HepG2 (cell line): ENCODE measurements at regions of chr14 and their contacts with region 1.

Region 1: DNA sequence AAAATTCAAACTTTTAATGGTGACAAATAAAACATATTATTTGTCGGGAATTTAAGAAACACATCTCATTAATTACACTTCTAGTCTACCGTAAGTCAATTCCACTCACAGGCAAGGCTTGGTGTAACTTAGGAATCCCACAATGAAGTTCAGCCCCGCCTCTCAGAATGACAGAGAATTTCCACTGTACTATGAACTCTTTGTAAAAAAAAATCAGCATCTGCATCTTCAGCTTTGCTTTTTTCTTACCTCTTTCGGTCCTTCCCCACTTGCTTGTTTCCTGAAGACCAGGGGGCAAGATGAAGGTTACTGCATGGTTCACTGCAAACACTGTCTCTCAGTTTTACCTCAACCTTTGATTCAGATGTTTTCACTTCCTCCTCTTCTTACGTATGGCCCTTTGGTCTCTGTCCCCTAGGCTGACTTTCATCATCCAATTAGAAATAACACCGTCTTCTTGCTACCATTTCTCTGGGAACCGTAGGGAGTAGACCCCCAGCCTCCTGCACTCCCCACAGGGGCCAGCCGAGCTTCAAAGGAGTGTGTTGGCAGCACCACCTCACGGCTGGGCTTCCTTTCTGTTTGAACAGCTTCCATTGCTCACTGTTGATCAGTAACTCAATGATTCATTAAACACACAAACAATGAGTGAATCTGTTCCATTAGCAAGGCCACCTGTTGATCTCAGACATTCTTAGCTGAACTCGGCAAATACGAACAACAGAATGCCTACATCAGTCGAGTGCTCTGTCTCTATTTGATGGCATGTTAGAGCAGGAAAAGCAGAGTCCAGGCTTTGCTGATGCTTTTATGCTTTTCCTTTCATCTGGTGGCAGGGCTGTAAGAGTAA is 343.0 kb downstream of the BMP4 start:
- DNase-seq: peak; percentile 100
- ATAC-seq: peak; percentile 98
- H3K4me3 ChIP-seq: peak overlapping the region; percentile 70 to 72 (median 70)
- H3K27ac ChIP-seq: peak overlapping the region; percentile 98
- H3K4me1 ChIP-seq: peaks cover 91% of the 10 kb centered on the region
- H3K27me3 ChIP-seq: no peaks in the 10 kb centered on the region
- CTCF ChIP-seq: peak; percentile 72
- EP300 ChIP-seq: peak; percentile 94 to 97
- POLR2A ChIP-seq: peak; percentile 62 to 73; a peak in 3 of 4 replicates
- RAD21 ChIP-seq: no peak; the same call in 1 of the 2 replicates

Region 2: DNA sequence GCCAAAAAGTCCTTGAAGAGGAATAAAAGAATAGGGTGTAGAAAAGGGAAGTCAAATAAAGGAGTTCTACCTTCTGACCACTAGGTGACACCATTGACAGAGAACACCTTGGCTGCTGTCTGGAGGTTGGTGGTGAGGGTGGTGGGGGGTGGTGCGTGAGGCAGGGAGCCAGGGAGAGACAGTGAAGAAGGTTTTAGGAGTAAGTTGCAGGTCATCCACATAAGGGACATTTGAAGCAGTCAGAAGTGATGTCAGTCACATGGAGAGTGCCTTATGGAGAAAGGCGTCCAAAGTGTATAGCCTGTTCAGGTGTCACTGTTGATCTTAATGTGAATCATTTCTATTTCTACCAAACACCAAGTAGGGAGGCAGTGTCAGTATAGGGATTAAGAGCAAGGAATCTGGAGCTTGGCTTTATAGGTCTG is 181.2 kb before region 1 on chr14:
- CTCF ChIA-PET with region 1: no interaction called
- POLR2A ChIA-PET with region 1: interaction called, 3 read pairs
- in situ Hi-C with region 1: no loop called
- intact Hi-C with region 1: loop called (anchors 10 kb)
- DNase-seq: peak; percentile 59
- ATAC-seq: peak; percentile 92
- H3K4me3 ChIP-seq: no peak overlapping the region
- H3K27ac ChIP-seq: no peak overlapping the region
- H3K4me1 ChIP-seq: peaks cover 27% of the 10 kb centered on the region
- H3K27me3 ChIP-seq: no peaks in the 10 kb centered on the region
- CTCF ChIP-seq: peak; percentile 92
- EP300 ChIP-seq: no peak
- POLR2A ChIP-seq: no peak
- RAD21 ChIP-seq: peak; percentile 88

Region 3: DNA sequence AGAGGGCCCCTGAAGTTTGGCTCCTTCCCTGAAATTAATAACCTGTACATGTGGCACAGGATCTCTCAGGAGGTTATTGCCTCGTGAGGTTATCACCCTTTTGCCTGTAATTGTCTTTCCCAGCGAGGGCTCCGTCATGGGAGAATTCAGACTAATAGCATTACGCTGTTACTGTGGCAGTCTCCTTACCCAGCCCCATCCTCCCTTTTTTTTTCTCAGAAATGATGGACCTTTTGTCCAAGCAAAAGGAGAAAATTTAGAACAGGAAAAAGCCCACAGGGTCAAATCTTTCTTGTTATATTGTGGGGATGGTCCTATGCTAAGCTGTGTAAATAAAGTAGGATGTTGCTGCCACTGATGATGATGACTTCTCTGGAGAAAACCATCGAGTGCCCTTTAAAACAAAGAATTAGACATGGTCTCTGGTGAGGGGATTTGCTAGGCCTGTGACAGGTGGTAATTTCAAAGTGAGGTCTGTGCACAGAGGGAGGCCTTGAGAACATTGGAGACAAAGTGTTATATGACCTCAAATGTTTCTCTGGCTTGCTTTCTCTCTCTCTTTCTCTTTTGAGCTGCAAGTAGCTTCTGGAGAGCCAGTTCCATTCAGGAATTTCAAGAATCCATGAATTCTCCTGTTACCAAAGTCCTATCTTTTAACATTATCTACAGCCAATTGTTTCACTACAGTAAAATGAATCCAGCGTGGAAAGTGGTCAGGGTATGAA is 14.2 kb before region 1 on chr14:
- CTCF ChIA-PET with region 1: no interaction called
- POLR2A ChIA-PET with region 1: interaction called, 26 read pairs
- in situ Hi-C with region 1: no loop called
- intact Hi-C with region 1: no loop called
- DNase-seq: peak; percentile 15
- ATAC-seq: no peak
- H3K4me3 ChIP-seq: no peak overlapping the region
- H3K27ac ChIP-seq: no peak overlapping the region
- H3K4me1 ChIP-seq: peaks cover 22% of the 10 kb centered on the region
- H3K27me3 ChIP-seq: no peaks in the 10 kb centered on the region
- CTCF ChIP-seq: no peak
- EP300 ChIP-seq: no peak
- POLR2A ChIP-seq: no peak
- RAD21 ChIP-seq: no peak

Region 4: GRCh38 chr14:53855127-53855526 is 241.5 kb after region 1 on chr14:
- CTCF ChIA-PET with region 1: no interaction called
- POLR2A ChIA-PET with region 1: interaction called, 8 read pairs
- in situ Hi-C with region 1: no loop called
- intact Hi-C with region 1: loop called (anchors 1 kb)
- DNase-seq: peak; percentile 96
- ATAC-seq: peak; percentile 62
- H3K4me3 ChIP-seq: peak overlapping the region in 1 of 3 experiments; percentile 5; a peak in 1 of 6 replicates
- H3K27ac ChIP-seq: peak overlapping the region; percentile 80
- H3K4me1 ChIP-seq: peaks cover 95% of the 10 kb centered on the region
- H3K27me3 ChIP-seq: no peaks in the 10 kb centered on the region
- CTCF ChIP-seq: no peak
- EP300 ChIP-seq: peak in 1 of 2 experiments; percentile 82; a peak in 2 of 4 replicates
- POLR2A ChIP-seq: no peak
- RAD21 ChIP-seq: no peak

Region 5: GRCh38 chr14:53946404-53947096 is 332.9 kb after region 1 on chr14:
- CTCF ChIA-PET with region 1: no interaction called
- POLR2A ChIA-PET with region 1: interaction called, 6 read pairs
- in situ Hi-C with region 1: loop called (anchors 10 kb)
- intact Hi-C with region 1: no loop called
- DNase-seq: no peak
- ATAC-seq: no peak; the same call in 2 of the 3 replicates
- H3K4me3 ChIP-seq: no peak overlapping the region
- H3K27ac ChIP-seq: no peak overlapping the region
- H3K4me1 ChIP-seq: peaks cover 77% of the 10 kb centered on the region
- H3K27me3 ChIP-seq: no peaks in the 10 kb centered on the region
- CTCF ChIP-seq: no peak
- EP300 ChIP-seq: no peak
- POLR2A ChIP-seq: no peak
- RAD21 ChIP-seq: no peak

Region 6: DNA sequence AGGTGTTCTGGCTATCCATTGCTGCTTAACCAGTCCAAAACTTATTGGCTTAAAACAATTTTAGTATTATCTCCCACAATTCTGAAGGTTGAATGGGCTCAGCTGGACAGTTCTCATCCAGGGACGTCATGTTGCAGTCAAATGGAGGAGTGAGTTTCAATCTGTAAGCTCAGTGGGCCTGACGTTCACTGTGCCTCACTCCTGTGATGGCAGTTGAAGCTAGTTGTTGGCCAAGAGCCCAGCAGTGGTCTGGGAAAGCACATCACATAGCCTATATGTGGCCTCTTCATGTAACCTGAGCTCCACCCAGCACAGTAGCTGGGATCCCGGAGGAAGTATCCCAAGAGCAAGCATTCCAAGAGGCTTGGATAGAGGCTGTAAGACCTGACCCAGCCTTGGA is 742.5 kb after region 1 on chr14:
- CTCF ChIA-PET with region 1: no interaction called
- POLR2A ChIA-PET with region 1: interaction called, 19 read pairs
- in situ Hi-C with region 1: no loop called
- intact Hi-C with region 1: loop called (anchors 2 kb)
- DNase-seq: peak; percentile 58
- ATAC-seq: no peak
- H3K4me3 ChIP-seq: no peak overlapping the region
- H3K27ac ChIP-seq: peak overlapping the region; percentile 46
- H3K4me1 ChIP-seq: peaks cover 80% of the 10 kb centered on the region
- H3K27me3 ChIP-seq: no peaks in the 10 kb centered on the region
- CTCF ChIP-seq: no peak
- EP300 ChIP-seq: no peak
- POLR2A ChIP-seq: no peak
- RAD21 ChIP-seq: no peak